Activated B cell treated with CpG ODN at 0.5 μM for 24 hours (primary cell): ENCODE measurements at regions of chr7 and their contacts with region 1.

Region 1: DNA sequence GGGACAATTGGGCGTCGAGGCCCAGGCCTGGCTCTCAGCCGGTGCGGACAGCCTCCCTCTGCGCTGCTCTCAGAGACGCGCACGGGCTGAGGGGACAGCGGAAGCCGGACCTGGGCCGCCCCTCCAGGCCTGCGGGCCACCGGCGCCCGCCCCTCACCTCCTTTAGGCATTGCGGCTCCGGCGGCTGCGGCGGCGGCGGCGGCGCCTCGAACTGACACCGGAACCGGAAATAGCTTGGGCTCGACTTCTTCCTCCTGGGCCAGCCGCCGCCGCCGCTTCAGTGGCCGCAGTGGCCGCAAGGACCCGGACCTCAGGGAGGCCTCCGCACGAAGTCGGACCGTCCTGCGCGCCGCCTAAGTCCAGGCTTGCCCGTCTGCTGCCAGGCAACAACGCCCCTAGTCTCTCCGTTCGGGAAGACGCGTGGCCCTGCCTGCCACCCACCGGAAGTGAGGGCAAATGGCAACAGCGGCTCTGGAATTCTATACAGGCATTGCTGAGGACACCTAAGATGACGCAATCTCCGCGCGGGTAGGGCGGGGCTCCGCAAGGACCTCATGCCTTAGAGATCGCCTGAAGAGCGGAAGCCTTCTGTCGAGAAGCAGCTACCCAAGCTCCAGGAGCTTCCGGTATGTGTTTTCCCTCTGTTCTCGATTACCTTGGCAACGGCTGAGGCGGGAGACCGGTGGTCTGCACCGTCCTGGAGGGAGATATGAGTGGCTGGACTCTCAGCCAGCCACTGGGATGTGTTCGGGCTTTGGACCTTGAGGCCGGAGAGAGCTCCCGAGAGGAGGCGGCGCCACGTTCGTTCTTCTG is at the starts of genes BUD31 and PDAP1:
- DNase-seq: peak; percentile 96
- ATAC-seq: peak; percentile 88
- H3K4me3 Mint-ChIP-seq: peak within 1 kb of the TSS; percentile 100
- H3K27ac Mint-ChIP-seq: peak within 1 kb of the TSS; percentile 99
- H3K4me1 Mint-ChIP-seq: peaks cover 55% of the 10 kb centered on the region
- H3K27me3 Mint-ChIP-seq: no peaks in the 10 kb centered on the region
- CTCF ChIP-seq: no peak
- total RNA-seq, gene BUD31: 93.7 and 113 TPM in 2 replicates
- total RNA-seq, gene PDAP1: 105 and 134 TPM in 2 replicates

Region 2: GRCh38 chr7:99364961-99365817 is 43.4 kb before region 1 on chr7:
- CTCF ChIA-PET with region 1: interaction called, 7 read pairs
- POLR2A ChIA-PET with region 1: interaction called, 10 read pairs
- intact Hi-C with region 1: loop called (anchors 1 kb)
- DNase-seq: peak; percentile 55
- ATAC-seq: peak; percentile 99
- H3K4me3 Mint-ChIP-seq: no peak overlapping the region
- H3K27ac Mint-ChIP-seq: no peak overlapping the region
- H3K4me1 Mint-ChIP-seq: no peaks in the 10 kb centered on the region
- H3K27me3 Mint-ChIP-seq: no peaks in the 10 kb centered on the region
- CTCF ChIP-seq: no peak

Region 3: GRCh38 chr7:99386584-99387238 is 21.9 kb before region 1 on chr7:
- CTCF ChIA-PET with region 1: no interaction called
- POLR2A ChIA-PET with region 1: interaction called, 189 read pairs
- intact Hi-C with region 1: loop called (anchors 1 kb)
- DNase-seq: no peak
- ATAC-seq: peak; percentile 63
- H3K4me3 Mint-ChIP-seq: no peak overlapping the region
- H3K27ac Mint-ChIP-seq: peak overlapping the region; percentile 59
- H3K4me1 Mint-ChIP-seq: peaks cover 31% of the 10 kb centered on the region
- H3K27me3 Mint-ChIP-seq: no peaks in the 10 kb centered on the region
- CTCF ChIP-seq: no peak

Region 4: GRCh38 chr7:99438573-99439480 is 30.2 kb after region 1 on chr7 and contains the starts of genes CPSF4 and PTCD1:
- CTCF ChIA-PET with region 1: no interaction called
- POLR2A ChIA-PET with region 1: interaction called, 28 read pairs
- intact Hi-C with region 1: loop called (anchors 1 kb)
- DNase-seq: peak; percentile 84
- ATAC-seq: peak; percentile 94
- H3K4me3 Mint-ChIP-seq: peak within 1 kb of the TSS; percentile 98
- H3K27ac Mint-ChIP-seq: peak within 1 kb of the TSS; percentile 94
- H3K4me1 Mint-ChIP-seq: peaks cover 32% of the 10 kb centered on the region
- H3K27me3 Mint-ChIP-seq: no peaks in the 10 kb centered on the region
- CTCF ChIP-seq: no peak
- total RNA-seq, gene CPSF4: 46.2 and 60.9 TPM in 2 replicates
- total RNA-seq, gene PTCD1: 8.4 and 13.4 TPM in 2 replicates

Region 5: DNA sequence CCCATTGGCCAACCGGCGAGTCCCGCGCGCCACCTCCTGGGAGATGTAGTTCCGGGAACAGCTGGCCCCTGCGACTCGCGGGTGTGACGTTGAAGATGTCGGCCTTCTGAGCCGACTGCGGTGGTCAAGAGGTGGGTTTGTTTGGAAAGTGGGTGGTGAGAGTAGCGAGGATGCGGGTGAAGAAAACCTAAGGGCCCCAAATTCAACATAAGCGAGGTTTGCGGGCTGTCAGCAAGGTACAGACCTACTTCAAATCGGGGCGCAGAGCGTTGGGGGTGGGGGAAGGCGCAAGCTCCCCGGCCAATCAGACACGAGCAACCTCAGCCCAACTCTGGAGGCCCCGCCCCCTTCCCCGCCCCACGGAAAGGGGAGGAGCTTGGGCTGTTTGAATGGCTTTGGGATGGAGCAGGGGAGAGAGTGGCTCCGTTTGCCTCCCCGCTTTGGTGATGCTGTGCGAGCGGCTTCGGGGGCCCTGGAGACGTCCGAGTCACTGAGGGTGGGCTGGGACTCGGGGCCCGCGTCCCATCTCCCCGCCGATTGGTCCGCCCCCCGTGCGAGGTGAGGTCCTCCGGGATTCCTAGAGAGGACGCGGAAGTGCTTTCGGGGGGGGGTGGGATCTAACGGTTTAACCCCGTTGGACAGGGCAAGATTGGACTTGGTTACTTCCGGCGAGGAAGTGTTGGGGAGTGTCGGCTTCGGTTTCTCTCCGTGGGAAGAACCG is 96.2 kb after region 1 on chr7 and contains the start of gene ZKSCAN5:
- CTCF ChIA-PET with region 1: no interaction called
- POLR2A ChIA-PET with region 1: interaction called, 24 read pairs
- intact Hi-C with region 1: loop called (anchors 1 kb)
- DNase-seq: peak; percentile 93
- ATAC-seq: peak; percentile 84
- H3K4me3 Mint-ChIP-seq: peak within 1 kb of the TSS; percentile 98
- H3K27ac Mint-ChIP-seq: peak within 1 kb of the TSS; percentile 98
- H3K4me1 Mint-ChIP-seq: peaks cover 38% of the 10 kb centered on the region
- H3K27me3 Mint-ChIP-seq: no peaks in the 10 kb centered on the region
- CTCF ChIP-seq: no peak
- total RNA-seq, gene ZKSCAN5: 9.5 and 10.3 TPM in 2 replicates